PC-3 (cell line): ENCODE measurements at regions of chr10 and their contacts with region 1.

Region 1: DNA sequence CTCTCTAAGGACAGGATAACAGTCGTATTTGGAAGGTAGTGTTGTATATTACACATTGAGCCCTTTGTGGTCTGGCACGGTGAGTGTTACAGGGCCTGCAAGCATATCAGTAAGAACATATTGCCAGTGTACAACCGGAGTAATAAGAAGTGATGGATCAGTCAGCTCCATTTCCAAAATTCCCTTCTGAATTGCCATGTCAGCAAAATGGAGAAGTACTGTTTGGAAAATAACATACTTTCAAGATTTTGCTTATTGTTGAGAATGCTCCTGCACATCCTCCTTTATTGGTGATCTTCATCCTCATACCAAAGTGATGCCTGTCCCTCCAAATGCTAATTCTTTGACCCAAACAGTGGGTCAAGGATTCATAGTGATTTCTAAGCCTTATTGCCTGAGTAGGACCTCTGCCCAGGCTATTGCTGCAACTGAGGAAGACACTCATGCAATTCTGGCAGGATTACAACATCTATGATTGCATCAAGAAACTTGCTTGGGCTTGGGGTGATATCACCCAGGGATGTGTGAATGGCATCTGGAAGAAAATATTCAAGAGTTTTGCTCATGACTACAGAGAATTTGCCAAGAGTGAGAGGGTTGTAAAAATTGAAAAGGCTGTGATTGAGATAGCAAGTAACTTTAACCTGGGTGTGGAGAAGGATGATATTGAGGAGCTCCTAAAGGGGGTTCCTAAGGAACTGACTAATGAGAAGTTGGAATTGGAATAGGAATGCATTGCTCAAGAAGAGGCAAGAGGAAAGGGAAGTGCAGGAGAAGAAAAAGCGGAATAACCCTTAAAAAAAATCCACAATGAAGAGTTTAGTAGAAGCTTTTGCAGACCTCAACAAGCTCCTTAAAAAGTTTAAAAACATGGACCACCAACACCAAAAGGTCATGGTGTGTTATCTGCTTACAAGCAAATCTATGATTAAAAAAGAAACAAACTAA is 452.2 kb upstream of the SORCS1 start:
- DNase-seq: no peak
- ATAC-seq: no peak
- H3K4me3 ChIP-seq: no peak overlapping the region
- H3K27ac ChIP-seq: no peak overlapping the region
- H3K4me1 ChIP-seq: peaks cover 38% of the 10 kb centered on the region
- H3K27me3 ChIP-seq: no peaks in the 10 kb centered on the region
- CTCF ChIP-seq: no peak

Region 2: DNA sequence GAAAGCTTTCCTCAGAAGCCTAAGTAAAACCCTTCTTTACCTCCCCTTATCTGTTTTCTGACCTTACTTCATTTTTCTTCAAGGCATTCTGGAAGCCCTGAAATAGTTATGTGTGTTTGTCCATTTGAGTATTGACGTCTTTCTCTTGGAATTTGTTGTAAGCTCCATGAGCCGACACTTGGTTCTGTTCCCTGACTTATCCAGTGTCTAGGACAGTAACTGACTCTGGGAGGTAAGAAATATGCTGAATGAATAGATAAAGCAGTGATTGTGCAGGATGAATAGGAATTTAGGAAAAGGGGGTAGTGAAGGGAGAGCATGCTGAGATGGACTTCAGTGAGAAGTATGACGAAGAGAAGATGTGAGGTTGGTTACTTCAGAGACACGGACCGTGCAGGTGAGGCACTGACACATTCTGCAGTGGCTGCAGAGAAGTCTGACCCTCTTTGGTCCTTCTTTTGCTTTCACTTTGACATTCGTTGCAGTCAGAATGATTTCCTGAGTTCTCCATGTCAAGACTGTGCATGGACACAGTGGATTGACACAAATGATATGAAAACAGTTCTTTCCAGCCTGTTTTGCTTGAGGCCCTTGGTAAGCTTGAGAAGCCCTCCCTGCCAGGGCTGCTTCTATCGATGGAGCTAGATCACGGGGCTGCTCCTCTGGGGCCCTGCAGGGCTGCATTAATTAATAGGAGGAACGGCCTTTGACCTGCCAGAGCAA is 190.7 kb before region 1 on chr10:
- CTCF ChIA-PET with region 1: no interaction called
- POLR2A ChIA-PET with region 1: no interaction called
- intact Hi-C with region 1: loop called (anchors 10 kb)
- DNase-seq: no peak
- ATAC-seq: no peak; the same call in 1 of the 2 replicates
- H3K4me3 ChIP-seq: peak overlapping the region; percentile 12
- H3K27ac ChIP-seq: no peak overlapping the region
- H3K4me1 ChIP-seq: no peaks in the 10 kb centered on the region
- H3K27me3 ChIP-seq: no peaks in the 10 kb centered on the region
- CTCF ChIP-seq: no peak

Region 3: GRCh38 chr10:107747851-107748250 is 131.1 kb after region 1 on chr10:
- CTCF ChIA-PET with region 1: no interaction called
- POLR2A ChIA-PET with region 1: no interaction called
- intact Hi-C with region 1: loop called (anchors 5 kb)
- DNase-seq: peak; percentile 65
- ATAC-seq: peak; percentile 85
- H3K4me3 ChIP-seq: no peak overlapping the region
- H3K27ac ChIP-seq: peak overlapping the region; percentile 89
- H3K4me1 ChIP-seq: peaks cover 25% of the 10 kb centered on the region
- H3K27me3 ChIP-seq: no peaks in the 10 kb centered on the region
- CTCF ChIP-seq: no peak